ENCODE measurements at regions of chr14 and their contacts with region 1.

Region 1: DNA sequence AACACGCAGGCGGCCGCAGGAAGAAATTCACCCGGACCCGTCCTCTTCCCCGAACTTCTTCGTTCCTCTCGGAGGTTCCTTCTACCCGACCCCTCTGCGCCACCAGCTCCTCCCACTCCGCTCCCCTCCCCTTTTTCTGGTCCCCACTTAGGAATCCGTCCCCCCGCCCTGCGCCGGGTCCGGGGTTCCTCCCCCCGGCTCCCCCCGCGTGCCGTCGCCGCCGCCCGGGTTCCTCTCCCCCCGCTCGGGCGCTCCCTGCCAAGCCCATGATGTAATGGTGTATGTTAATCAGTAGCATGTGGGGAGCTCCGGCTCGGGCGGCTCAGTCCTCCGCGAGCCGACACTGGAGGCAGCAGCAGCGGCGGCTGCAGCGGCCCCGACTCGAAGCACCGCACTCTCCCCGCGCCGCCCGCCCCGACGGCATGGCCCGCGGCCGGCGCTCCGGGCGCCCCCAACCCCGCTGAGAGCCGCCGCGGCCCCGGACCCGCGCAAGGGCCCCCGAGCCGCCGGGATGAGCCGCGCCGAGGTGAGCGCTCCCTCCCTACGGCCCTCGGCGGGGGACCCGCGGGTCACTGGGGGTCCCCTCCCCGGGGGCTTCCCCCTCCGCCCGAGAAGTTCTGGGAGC is 1.0 kb upstream of the SAMD4A start:
- DNase-seq: peak; percentile 61
- H3K4me3 Mint-ChIP-seq: peak overlapping the region; percentile 75
- H3K27ac Mint-ChIP-seq: no peak overlapping the region
- H3K4me1 Mint-ChIP-seq: peaks cover 21% of the 10 kb centered on the region
- H3K27me3 Mint-ChIP-seq: peaks cover 54% of the 10 kb centered on the region

Region 2: GRCh38 chr14:54440873-54441868 is 124.7 kb before region 1 on chr14 and contains the start of gene CNIH1:
- intact Hi-C with region 1: loop called (anchors 2 kb)
- DNase-seq: peak; percentile 91
- H3K4me3 Mint-ChIP-seq: peak within 1 kb of the TSS; percentile 89
- H3K27ac Mint-ChIP-seq: peak within 1 kb of the TSS; percentile 93
- H3K4me1 Mint-ChIP-seq: peaks cover 45% of the 10 kb centered on the region
- H3K27me3 Mint-ChIP-seq: peaks cover 2% of the 10 kb centered on the region
- total RNA-seq, gene CNIH1: 105 and 109 TPM in 2 replicates

Region 3: GRCh38 chr14:54622192-54622958 is 56.5 kb after region 1 on chr14:
- intact Hi-C with region 1: loop called (anchors 1 kb)
- DNase-seq: no peak
- H3K4me3 Mint-ChIP-seq: no peak overlapping the region
- H3K27ac Mint-ChIP-seq: no peak overlapping the region
- H3K4me1 Mint-ChIP-seq: peaks cover 19% of the 10 kb centered on the region
- H3K27me3 Mint-ChIP-seq: peaks cover 3% of the 10 kb centered on the region

Region 4: GRCh38 chr14:54691525-54692283 is 125.8 kb after region 1 on chr14:
- intact Hi-C with region 1: loop called (anchors 1 kb)
- DNase-seq: peak; percentile 22
- H3K4me3 Mint-ChIP-seq: no peak overlapping the region
- H3K27ac Mint-ChIP-seq: no peak overlapping the region
- H3K4me1 Mint-ChIP-seq: peaks cover 9% of the 10 kb centered on the region
- H3K27me3 Mint-ChIP-seq: peaks cover 25% of the 10 kb centered on the region

Region 5: DNA sequence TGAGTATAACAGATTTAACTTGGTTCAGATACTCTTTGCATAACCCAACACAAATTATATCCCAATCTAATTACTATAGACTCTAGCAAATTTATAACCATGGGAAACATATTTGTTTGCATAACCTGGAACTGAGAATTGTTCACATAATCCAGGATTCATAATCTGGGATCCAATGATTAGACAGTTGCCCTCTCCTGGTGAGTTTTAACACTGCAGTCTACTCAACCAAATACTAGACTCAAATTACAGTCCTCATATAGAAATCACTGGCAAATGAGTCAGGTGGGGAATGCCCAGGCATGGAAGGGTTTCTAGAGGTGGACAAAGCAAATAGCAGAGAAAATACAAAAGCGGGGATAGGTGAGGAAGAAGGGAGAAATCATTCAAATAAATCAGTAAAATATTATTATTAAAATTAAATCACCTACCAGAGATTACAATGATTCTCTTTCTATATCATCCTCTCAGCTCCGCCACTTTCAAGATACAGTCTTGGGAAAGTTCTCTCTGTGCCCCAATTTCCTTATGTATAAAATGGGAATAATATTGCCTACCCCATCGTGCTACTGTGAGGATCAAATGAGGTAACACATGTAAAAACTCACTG is 327.4 kb after region 1 on chr14:
- intact Hi-C with region 1: loop called (anchors 1 kb)
- DNase-seq: no peak
- H3K4me3 Mint-ChIP-seq: no peak overlapping the region
- H3K27ac Mint-ChIP-seq: peak overlapping the region; percentile 36
- H3K4me1 Mint-ChIP-seq: peaks cover 55% of the 10 kb centered on the region
- H3K27me3 Mint-ChIP-seq: no peaks in the 10 kb centered on the region

Measured in activated T-helper 1 cell treated with anti-CD3 and anti-CD28 coated beads, Interleukin-12 subunit alpha, Interleukin-12 subunit beta, Interleukin-2, Interleukin-4 antibody, amounts not matched to agents 30 ng/mL and 10 ng/mL and 1 ng/mL, durations not matched to agents 14 hours and 24 hours and 36 hours (primary cell).